Endothelial cell of umbilical vein (primary cell): ENCODE measurements at regions of chr12 and their contacts with region 1.

Region 1: GRCh38 chr12:76277480-76277879 is 70.7 kb downstream of the BBS10 start:
- DNase-seq: peak; percentile 54
- H3K4me3 ChIP-seq: no peak overlapping the region
- H3K27ac ChIP-seq: peak overlapping the region; percentile 87
- H3K4me1 ChIP-seq: peaks cover 45% of the 10 kb centered on the region
- H3K27me3 ChIP-seq: no peaks in the 10 kb centered on the region
- CTCF ChIP-seq: no peak
- POLR2A ChIP-seq: no peak

Region 2: GRCh38 chr12:75933101-75933500 is 344.4 kb before region 1 on chr12:
- CTCF ChIA-PET with region 1: no interaction called
- POLR2A ChIA-PET with region 1: no interaction called
- dilution Hi-C with region 1: no loop called
- intact Hi-C with region 1: no loop called
- DNase-seq: peak; percentile 27
- H3K4me3 ChIP-seq: no peak overlapping the region
- H3K27ac ChIP-seq: no peak overlapping the region
- H3K4me1 ChIP-seq: peaks cover 20% of the 10 kb centered on the region
- H3K27me3 ChIP-seq: peaks cover 13% of the 10 kb centered on the region in 2 experiments
- CTCF ChIP-seq: no peak
- POLR2A ChIP-seq: no peak

Region 3: GRCh38 chr12:76266797-76267196 is 10.7 kb before region 1 on chr12:
- CTCF ChIA-PET with region 1: interaction called, 10 read pairs
- POLR2A ChIA-PET with region 1: interaction called, 6 read pairs
- dilution Hi-C with region 1: no loop called
- intact Hi-C with region 1: loop called (anchors 1 kb)
- DNase-seq: peak; percentile 64
- H3K4me3 ChIP-seq: no peak overlapping the region
- H3K27ac ChIP-seq: peak overlapping the region; percentile 51
- H3K4me1 ChIP-seq: peaks cover 34% of the 10 kb centered on the region
- H3K27me3 ChIP-seq: no peaks in the 10 kb centered on the region
- CTCF ChIP-seq: no peak
- POLR2A ChIP-seq: no peak

Region 4: GRCh38 chr12:76337583-76337982 is 60.1 kb after region 1 on chr12:
- CTCF ChIA-PET with region 1: no interaction called
- POLR2A ChIA-PET with region 1: interaction called, 3 read pairs
- dilution Hi-C with region 1: no loop called
- intact Hi-C with region 1: loop called (anchors 2 kb)
- DNase-seq: peak; percentile 52
- H3K4me3 ChIP-seq: no peak overlapping the region
- H3K27ac ChIP-seq: peak overlapping the region; percentile 55
- H3K4me1 ChIP-seq: peaks cover 28% of the 10 kb centered on the region
- H3K27me3 ChIP-seq: no peaks in the 10 kb centered on the region
- CTCF ChIP-seq: no peak
- POLR2A ChIP-seq: no peak

Region 5: DNA sequence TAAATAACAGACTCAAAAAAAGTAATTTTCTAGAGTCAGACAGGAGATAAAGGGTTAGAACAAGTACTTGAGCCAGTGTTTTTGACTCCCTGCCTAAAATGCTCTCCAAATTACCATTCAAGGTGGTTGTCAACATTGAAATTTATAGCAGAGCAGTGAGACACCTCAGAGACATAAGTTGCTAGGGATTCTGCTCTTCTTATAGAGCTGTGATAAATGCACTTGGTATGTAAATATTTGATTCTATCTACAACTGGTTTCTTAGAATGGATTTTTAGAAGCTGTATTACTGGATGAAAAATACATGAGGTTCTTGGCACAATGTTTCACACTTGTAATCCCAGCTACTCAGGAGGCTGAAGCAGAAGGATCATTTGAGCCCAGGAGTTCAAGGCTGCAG is 366.0 kb after region 1 on chr12:
- CTCF ChIA-PET with region 1: no interaction called
- POLR2A ChIA-PET with region 1: no interaction called
- dilution Hi-C with region 1: no loop called
- intact Hi-C with region 1: no loop called
- DNase-seq: no peak
- H3K4me3 ChIP-seq: no peak overlapping the region
- H3K27ac ChIP-seq: no peak overlapping the region
- H3K4me1 ChIP-seq: no peaks in the 10 kb centered on the region
- H3K27me3 ChIP-seq: no peaks in the 10 kb centered on the region
- CTCF ChIP-seq: no peak
- POLR2A ChIP-seq: no peak